ENCODE measurements at regions of chr19 and their contacts with region 1.

Region 1: DNA sequence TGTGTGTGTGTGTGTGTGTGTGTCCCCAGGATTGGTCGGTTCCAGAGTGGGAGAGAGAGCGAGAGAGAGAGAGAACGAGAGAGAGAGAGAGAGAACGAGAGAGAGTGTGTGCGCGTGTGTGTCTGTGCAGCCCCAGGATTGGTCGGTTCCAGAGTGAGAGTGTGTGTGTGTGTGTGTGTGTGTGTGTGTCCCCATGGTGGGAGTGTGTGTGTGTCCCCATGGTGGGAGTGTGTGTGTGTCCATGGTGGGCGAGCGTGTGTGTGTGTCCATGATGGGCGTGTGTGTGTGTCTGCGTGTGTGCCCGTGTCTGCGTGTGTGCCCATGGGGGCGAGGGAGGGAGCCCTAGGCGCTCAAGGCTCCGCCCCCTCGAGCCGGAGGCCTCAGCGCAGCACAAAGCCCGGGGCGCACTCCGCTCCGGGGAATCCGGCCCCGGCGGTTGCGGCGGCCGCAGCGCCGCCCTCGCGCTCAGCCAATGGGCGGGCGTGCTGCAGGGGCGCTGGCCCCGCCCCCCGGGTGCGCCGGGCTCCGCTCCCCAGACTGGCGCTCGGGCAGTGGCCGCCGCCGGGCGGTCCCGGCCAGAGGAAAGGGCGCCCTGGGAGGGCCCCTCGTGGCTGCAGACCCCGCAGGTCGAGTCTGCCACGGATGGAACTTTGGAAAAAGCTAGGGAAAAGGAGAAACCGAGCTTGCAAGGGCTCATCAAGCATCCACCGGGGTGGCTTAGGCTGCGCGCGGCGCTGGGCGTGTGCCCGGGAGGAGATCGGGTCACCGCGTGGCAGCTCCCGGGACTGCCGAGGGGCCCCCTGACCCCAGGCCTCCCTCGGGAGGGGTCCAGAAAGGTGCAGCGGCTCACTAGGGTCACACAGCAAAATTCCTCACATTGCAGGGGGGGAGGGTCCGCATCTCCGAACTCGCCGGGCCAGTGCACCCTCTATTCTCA is 96.2 kb downstream of the INSR start:
- DNase-seq: peak; percentile 81
- ATAC-seq: peak; percentile 89
- H3K4me3 ChIP-seq: peak overlapping the region; percentile 70
- H3K27ac ChIP-seq: peak overlapping the region; percentile 75
- H3K4me1 ChIP-seq: peaks cover 17% of the 10 kb centered on the region
- H3K27me3 ChIP-seq: no peaks in the 10 kb centered on the region
- CTCF ChIP-seq: peak in 2 of 3 experiments; percentile 26 to 34; a peak in 2 of 6 replicates
- EP300 ChIP-seq: peak; percentile 16 to 52; a peak in 1 of 4 replicates
- POLR2A ChIP-seq: peak; percentile 80
- RAD21 ChIP-seq: peak; percentile 17; the same call in 1 of the 2 replicates

Region 2: DNA sequence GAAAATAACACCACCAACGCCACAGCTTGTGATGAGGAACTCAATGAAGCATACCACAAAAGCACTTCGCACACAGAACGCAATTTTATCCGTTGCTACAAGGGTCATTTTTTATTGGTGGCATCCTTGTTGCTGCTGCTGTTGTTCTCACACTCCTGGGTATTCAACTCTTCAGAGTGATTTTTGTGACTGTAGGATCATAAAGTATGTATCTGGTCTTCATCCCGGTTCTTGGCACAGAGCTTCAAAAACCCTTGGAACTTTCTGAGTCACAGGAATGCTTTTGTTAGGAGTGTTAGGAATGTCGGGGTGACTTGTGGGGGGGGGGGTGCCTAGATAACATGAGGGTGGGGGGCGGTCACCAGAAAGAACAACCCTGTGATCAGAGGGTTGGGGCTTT is 20.1 kb before region 1 on chr19:
- CTCF ChIA-PET with region 1: interaction called, 11 read pairs
- POLR2A ChIA-PET with region 1: interaction called, 21 read pairs
- RAD21 ChIA-PET with region 1: interaction called, 20 read pairs
- SMC1A ChIA-PET with region 1: interaction called, 52 read pairs
- in situ Hi-C with region 1: no loop called
- intact Hi-C with region 1: no loop called
- DNase-seq: no peak
- ATAC-seq: no peak
- H3K4me3 ChIP-seq: no peak overlapping the region
- H3K27ac ChIP-seq: no peak overlapping the region
- H3K4me1 ChIP-seq: peaks cover 41% of the 10 kb centered on the region
- H3K27me3 ChIP-seq: no peaks in the 10 kb centered on the region
- CTCF ChIP-seq: no peak
- EP300 ChIP-seq: no peak
- POLR2A ChIP-seq: no peak
- RAD21 ChIP-seq: no peak

Region 3: GRCh38 chr19:7242601-7243258 is 44.7 kb after region 1 on chr19:
- CTCF ChIA-PET with region 1: interaction called, 3 read pairs
- POLR2A ChIA-PET with region 1: interaction called, 5 read pairs
- RAD21 ChIA-PET with region 1: interaction called, 14 read pairs
- SMC1A ChIA-PET with region 1: interaction called, 5 read pairs
- in situ Hi-C with region 1: no loop called
- intact Hi-C with region 1: loop called (anchors 5 kb)
- DNase-seq: peak; percentile 77
- ATAC-seq: peak; percentile 91
- H3K4me3 ChIP-seq: peak overlapping the region; percentile 56; the same call in 1 of the 2 replicates
- H3K27ac ChIP-seq: peak overlapping the region; percentile 96
- H3K4me1 ChIP-seq: peaks cover 26% of the 10 kb centered on the region
- H3K27me3 ChIP-seq: no peaks in the 10 kb centered on the region
- CTCF ChIP-seq: peak in 1 of 3 experiments; percentile 12; a peak in 1 of 6 replicates
- EP300 ChIP-seq: no peak
- POLR2A ChIP-seq: no peak
- RAD21 ChIP-seq: 0 out of 2 replicates have a peak, but pooled peaks have one; percentile 5

Region 4: GRCh38 chr19:7293795-7294570 is 96.0 kb after region 1 on chr19 and contains the start of gene INSR:
- CTCF ChIA-PET with region 1: interaction called, 4 read pairs
- POLR2A ChIA-PET with region 1: interaction called, 8 read pairs
- RAD21 ChIA-PET with region 1: interaction called, 10 read pairs
- SMC1A ChIA-PET with region 1: interaction called, 7 read pairs
- in situ Hi-C with region 1: loop called (anchors 10 kb)
- intact Hi-C with region 1: loop called (anchors 1 kb)
- DNase-seq: peak; percentile 54
- ATAC-seq: peak; percentile 82
- H3K4me3 ChIP-seq: peak within 1 kb of the TSS; percentile 94
- H3K27ac ChIP-seq: peak within 1 kb of the TSS; percentile 74
- H3K4me1 ChIP-seq: peaks cover 13% of the 10 kb centered on the region
- H3K27me3 ChIP-seq: no peaks in the 10 kb centered on the region
- CTCF ChIP-seq: no peak
- EP300 ChIP-seq: no peak
- POLR2A ChIP-seq: peak; percentile 66
- RAD21 ChIP-seq: peak; percentile 19; the same call in 1 of the 2 replicates
- polyA plus RNA-seq, gene INSR: 4.2 to 8.0 TPM

Region 5: GRCh38 chr19:7393459-7393858 is 195.4 kb after region 1 on chr19:
- CTCF ChIA-PET with region 1: no interaction called
- POLR2A ChIA-PET with region 1: no interaction called
- RAD21 ChIA-PET with region 1: no interaction called
- SMC1A ChIA-PET with region 1: no interaction called
- in situ Hi-C with region 1: no loop called
- intact Hi-C with region 1: no loop called
- DNase-seq: no peak
- ATAC-seq: no peak
- H3K4me3 ChIP-seq: no peak overlapping the region
- H3K27ac ChIP-seq: no peak overlapping the region
- H3K4me1 ChIP-seq: peaks cover 7% of the 10 kb centered on the region
- H3K27me3 ChIP-seq: no peaks in the 10 kb centered on the region
- CTCF ChIP-seq: no peak
- EP300 ChIP-seq: no peak
- POLR2A ChIP-seq: no peak
- RAD21 ChIP-seq: no peak

Measured in GM12878 (cell line).